Colonic mucosa (tissue), 4 donors: ENCODE measurements at regions of chr6 and their contacts with region 1.

Region 1: GRCh38 chr6:13795041-13795750 is 19.2 kb downstream of the MCUR1 start:
- DNase-seq: peak; percentile 87
- H3K4me3 ChIP-seq: no peak overlapping the region
- H3K27ac ChIP-seq: no peak overlapping the region
- H3K4me1 ChIP-seq: no peaks in the 10 kb centered on the region
- H3K27me3 ChIP-seq: no peaks in the 10 kb centered on the region
- CTCF ChIP-seq: peak; percentile 95

Region 2: GRCh38 chr6:13873285-13874190 is 78.3 kb after region 1 on chr6:
- intact Hi-C with region 1: loop called (anchors 10 kb)
- DNase-seq: peak; percentile 82
- H3K4me3 ChIP-seq: peak overlapping the region; percentile 58
- H3K27ac ChIP-seq: no peak overlapping the region
- H3K4me1 ChIP-seq: peaks cover 5% of the 10 kb centered on the region
- H3K27me3 ChIP-seq: no peaks in the 10 kb centered on the region
- CTCF ChIP-seq: peak; percentile 56

Region 3: DNA sequence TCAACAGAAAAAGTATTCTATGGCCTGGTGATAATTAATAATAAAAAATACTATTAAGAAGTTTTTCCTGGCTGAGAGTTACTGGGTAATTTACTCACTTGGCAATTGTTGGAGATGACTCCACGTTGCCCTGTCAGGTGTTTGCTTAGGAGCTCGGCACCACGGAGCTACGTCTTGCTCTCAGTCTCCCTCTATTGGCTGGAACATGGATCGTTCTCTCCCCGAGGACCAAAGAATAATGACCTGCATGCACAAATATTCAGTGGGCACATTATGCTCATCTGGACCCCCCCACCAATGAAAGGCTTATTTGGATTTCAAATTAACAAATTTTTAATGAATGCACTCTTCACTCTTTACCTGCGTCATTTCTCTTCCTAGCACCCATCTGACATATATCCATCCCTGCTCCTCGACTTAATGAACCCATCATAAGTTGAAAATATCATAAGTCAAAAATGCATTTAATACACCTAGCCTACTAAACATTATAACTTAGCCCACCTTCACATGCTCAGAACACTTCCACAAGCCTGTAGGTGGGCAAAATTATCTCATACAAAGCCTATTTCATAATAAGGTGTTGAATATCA is 251.4 kb after region 1 on chr6:
- intact Hi-C with region 1: loop called (anchors 10 kb)
- DNase-seq: peak; percentile 38
- H3K4me3 ChIP-seq: no peak overlapping the region
- H3K27ac ChIP-seq: no peak overlapping the region
- H3K4me1 ChIP-seq: no peaks in the 10 kb centered on the region
- H3K27me3 ChIP-seq: no peaks in the 10 kb centered on the region
- CTCF ChIP-seq: peak; percentile 45

Region 4: DNA sequence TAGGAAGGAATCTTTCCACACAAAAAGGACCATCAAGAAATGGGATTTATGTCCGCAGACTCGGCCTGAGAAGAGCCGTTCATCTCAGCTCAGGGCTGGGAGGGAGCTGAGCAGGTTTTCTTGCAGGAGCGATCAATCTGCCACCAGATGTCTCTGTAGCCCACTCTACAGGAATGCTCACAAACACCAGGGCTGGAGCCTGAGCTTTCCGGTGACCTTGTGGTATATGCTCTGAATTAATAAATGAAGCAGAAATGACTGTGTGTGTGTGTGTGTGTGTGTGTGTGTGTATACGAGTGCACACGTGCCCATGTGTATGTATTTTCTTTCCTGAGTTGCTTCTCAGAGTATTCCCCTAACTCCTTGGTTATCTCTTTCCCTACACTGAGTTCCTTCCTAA is 334.4 kb after region 1 on chr6:
- intact Hi-C with region 1: no loop called
- DNase-seq: peak; percentile 53
- H3K4me3 ChIP-seq: no peak overlapping the region
- H3K27ac ChIP-seq: no peak overlapping the region
- H3K4me1 ChIP-seq: no peaks in the 10 kb centered on the region
- H3K27me3 ChIP-seq: no peaks in the 10 kb centered on the region
- CTCF ChIP-seq: peak; percentile 52